ENCODE measurements at regions of chr10 and their contacts with region 1.

Region 1: GRCh38 chr10:3961082-3961481 is 176.1 kb upstream of the KLF6 start:
- DNase-seq: peak; percentile 57 to 79 (median 71)
- H3K4me3 ChIP-seq: no peak overlapping the region
- H3K4me3 Mint-ChIP-seq: peak overlapping the region; percentile 12 to 82 (median 58)
- H3K27ac ChIP-seq: peak overlapping the region; percentile 19
- H3K27ac Mint-ChIP-seq: peak overlapping the region; percentile 81 to 90 (median 88)
- H3K4me1 ChIP-seq: peaks cover 26% of the 10 kb centered on the region
- H3K4me1 Mint-ChIP-seq: peaks cover 26 to 51% (median 28%) of the 10 kb centered on the region in 4 donors
- H3K27me3 ChIP-seq: no peaks in the 10 kb centered on the region
- H3K27me3 Mint-ChIP-seq: no peaks in the 10 kb centered on the region

Region 2: GRCh38 chr10:3980660-3981059 is 19.6 kb after region 1 on chr10:
- CTCF ChIA-PET with region 1: interaction called, 5 read pairs
- POLR2A ChIA-PET with region 1: interaction called, 24 read pairs
- intact Hi-C with region 1: no loop called
- DNase-seq: peak in 4 of 5 donors; percentile 29 to 52 (median 31)
- H3K4me3 ChIP-seq: no peak overlapping the region
- H3K4me3 Mint-ChIP-seq: peak overlapping the region; percentile 10 to 81 (median 68)
- H3K27ac ChIP-seq: peak overlapping the region; percentile 0
- H3K27ac Mint-ChIP-seq: peak overlapping the region in 6 of 7 donors; percentile 54 to 92 (median 77)
- H3K4me1 ChIP-seq: peaks cover 74% of the 10 kb centered on the region
- H3K4me1 Mint-ChIP-seq: peaks cover 0 to 42% (median 14%) of the 10 kb centered on the region in 4 donors
- H3K27me3 ChIP-seq: no peaks in the 10 kb centered on the region
- H3K27me3 Mint-ChIP-seq: no peaks in the 10 kb centered on the region